ENCODE measurements at regions of chr4 and their contacts with region 1.

Region 1: DNA sequence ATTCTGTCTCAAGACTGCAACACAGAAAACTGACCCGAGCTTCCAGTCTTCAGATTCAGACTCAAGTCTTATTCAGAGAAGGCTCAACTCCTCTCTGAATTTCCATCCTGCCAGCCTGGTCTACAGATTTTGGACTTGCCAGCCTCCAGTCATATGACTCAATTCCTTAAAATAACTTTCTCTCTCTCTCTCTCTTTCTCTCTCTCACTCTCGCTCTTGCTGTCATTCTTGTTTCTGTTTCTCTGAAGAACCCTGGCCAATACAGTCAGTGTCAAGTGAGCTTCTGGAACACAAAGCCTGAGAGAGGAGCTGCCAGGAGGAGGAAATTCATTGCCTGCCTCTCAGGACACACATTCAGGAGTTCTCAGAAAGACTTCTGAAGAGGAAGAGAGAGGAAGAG is 154.9 kb downstream of the PARM1 start:
- DNase-seq: no peak

Region 2: GRCh38 chr4:73222466-73223257 is 1865.2 kb before region 1 on chr4:
- intact Hi-C with region 1: no loop called
- DNase-seq: no peak

Region 3: GRCh38 chr4:75154994-75155393 is 67.1 kb after region 1 on chr4:
- intact Hi-C with region 1: loop called in 1 of 2 experiments (anchors 2 kb)
- DNase-seq: no peak